Calu3 (cell line): ENCODE measurements at regions of chr2 and their contacts with region 1.

Region 1: DNA sequence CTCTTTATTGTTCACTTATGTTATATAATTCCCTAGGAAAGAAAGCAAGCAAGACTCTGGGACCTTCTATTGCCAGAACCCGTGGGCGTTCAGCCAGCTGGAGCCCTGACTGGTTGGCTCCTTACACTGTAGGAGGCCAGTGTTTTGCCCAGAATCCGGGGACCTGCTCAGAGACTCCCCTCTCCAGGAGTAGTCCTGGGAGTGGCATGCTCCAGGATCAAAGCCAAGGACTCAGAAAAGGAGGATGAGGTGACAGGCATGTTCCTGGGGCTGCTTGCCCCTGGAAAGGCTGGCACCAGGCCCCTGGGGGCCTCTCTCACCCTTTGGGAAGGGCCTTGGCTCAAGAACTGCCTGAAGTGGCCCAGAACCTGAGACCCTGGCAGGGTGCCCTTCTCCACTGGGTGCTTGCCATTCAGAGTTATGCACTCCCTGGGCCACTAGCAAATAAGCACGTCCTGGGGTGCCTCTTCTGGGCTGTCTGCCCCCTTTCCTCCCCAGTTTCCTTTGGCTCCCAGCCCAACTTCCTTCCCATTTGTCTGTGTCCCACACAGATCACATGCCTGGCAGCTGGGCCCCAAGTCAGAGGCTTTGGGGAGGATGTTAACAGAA is 19.6 kb upstream of the KIF3C start:
- DNase-seq: no peak
- H3K4me3 Mint-ChIP-seq: no peak overlapping the region
- H3K27ac Mint-ChIP-seq: no peak overlapping the region
- H3K4me1 Mint-ChIP-seq: peaks cover 57% of the 10 kb centered on the region
- H3K27me3 Mint-ChIP-seq: no peaks in the 10 kb centered on the region
- CTCF ChIP-seq: no peak

Region 2: GRCh38 chr2:26355038-26355995 is 353.5 kb after region 1 on chr2:
- CTCF ChIA-PET with region 1: interaction called, 11 read pairs
- intact Hi-C with region 1: no loop called
- DNase-seq: peak; percentile 44
- H3K4me3 Mint-ChIP-seq: peak overlapping the region; percentile 29
- H3K27ac Mint-ChIP-seq: peak overlapping the region; percentile 78
- H3K4me1 Mint-ChIP-seq: peaks cover 77% of the 10 kb centered on the region
- H3K27me3 Mint-ChIP-seq: no peaks in the 10 kb centered on the region
- CTCF ChIP-seq: no peak